ENCODE measurements at regions of chr12 and their contacts with region 1.

Region 1: GRCh38 chr12:119544765-119545625 is 48.6 kb upstream of the TMEM233 start:
- DNase-seq: peak; percentile 62 to 83 (median 63)
- ATAC-seq: peak; percentile 62 to 80
- H3K4me3 ChIP-seq: no peak overlapping the region
- H3K27ac ChIP-seq: no peak overlapping the region
- H3K4me1 ChIP-seq: no peaks in the 10 kb centered on the region
- H3K27me3 ChIP-seq: no peaks in the 10 kb centered on the region

Region 2: GRCh38 chr12:119375075-119375882 is 169.7 kb before region 1 on chr12:
- intact Hi-C with region 1: no loop called
- DNase-seq: no peak
- ATAC-seq: peak in 1 of 2 donors; percentile 17
- H3K4me3 ChIP-seq: no peak overlapping the region
- H3K27ac ChIP-seq: no peak overlapping the region
- H3K4me1 ChIP-seq: peaks cover 7% of the 10 kb centered on the region
- H3K27me3 ChIP-seq: no peaks in the 10 kb centered on the region

Region 3: DNA sequence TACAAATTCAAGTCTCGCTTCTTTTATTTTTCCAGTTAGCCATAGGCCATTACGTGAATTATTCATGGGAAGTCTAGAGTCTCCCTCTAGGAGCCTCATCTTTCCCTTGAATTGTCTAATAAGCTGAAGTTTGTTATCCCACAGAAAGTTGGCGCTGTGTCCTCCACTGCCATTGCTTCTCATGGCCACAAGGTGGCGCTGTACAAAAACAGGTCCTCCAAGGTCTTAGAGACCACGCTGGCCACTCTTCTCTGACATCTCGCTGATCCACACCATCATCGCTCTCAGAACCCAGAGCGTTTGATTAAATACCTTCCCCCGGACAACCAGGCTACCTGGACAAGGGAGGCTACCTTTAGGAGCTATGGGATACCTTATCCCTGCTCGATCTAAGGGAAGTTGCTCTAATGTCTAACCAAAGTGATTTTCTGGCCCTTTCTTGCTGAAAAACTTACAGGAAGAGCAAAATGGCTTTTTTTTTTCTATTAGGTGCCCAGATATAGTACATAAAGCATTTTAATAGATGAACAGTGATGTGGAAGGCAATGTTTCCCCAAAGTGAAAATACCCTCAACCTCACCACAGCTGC is 100.4 kb before region 1 on chr12:
- intact Hi-C with region 1: loop called in 3 of 4 experiments (anchors 2 to 5 kb)
- DNase-seq: peak; percentile 33 to 65 (median 53)
- ATAC-seq: peak in 1 of 2 donors; percentile 54
- H3K4me3 ChIP-seq: no peak overlapping the region
- H3K27ac ChIP-seq: no peak overlapping the region
- H3K4me1 ChIP-seq: no peaks in the 10 kb centered on the region
- H3K27me3 ChIP-seq: no peaks in the 10 kb centered on the region

Region 4: GRCh38 chr12:119457287-119457686 is 87.7 kb before region 1 on chr12:
- intact Hi-C with region 1: no loop called
- DNase-seq: no peak
- ATAC-seq: no peak
- H3K4me3 ChIP-seq: no peak overlapping the region
- H3K27ac ChIP-seq: no peak overlapping the region
- H3K4me1 ChIP-seq: no peaks in the 10 kb centered on the region
- H3K27me3 ChIP-seq: no peaks in the 10 kb centered on the region

Region 5: GRCh38 chr12:119613319-119613936 is 68.4 kb after region 1 on chr12:
- intact Hi-C with region 1: no loop called
- DNase-seq: no peak
- ATAC-seq: no peak
- H3K4me3 ChIP-seq: no peak overlapping the region
- H3K27ac ChIP-seq: no peak overlapping the region
- H3K4me1 ChIP-seq: no peaks in the 10 kb centered on the region
- H3K27me3 ChIP-seq: no peaks in the 10 kb centered on the region

Measured in right cardiac atrium (tissue), 5 donors.